AG04450 (cell line): ENCODE measurements at regions of chr7 and their contacts with region 1.

Region 1: DNA sequence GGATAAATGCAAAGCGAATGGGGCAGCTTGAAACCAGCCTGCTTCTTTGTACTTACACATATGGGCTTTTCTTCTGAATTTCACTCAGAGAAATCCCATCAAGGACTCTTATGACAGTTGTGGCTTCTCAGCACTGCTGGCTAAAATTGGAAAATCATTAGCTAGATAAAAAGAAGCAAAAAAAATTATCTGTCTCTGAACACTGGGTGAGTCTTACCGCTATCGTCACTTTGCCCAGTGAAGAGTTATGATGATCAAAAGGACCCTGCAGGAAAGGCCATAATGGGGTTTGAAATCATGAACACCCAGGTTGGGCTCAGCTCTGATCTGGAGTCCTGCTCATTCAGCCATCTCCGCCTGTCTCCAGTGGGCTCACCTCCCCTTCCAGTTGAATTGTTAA is 34.3 kb downstream of the AOAH start:
- DNase-seq: no peak
- H3K4me3 ChIP-seq: no peak overlapping the region
- H3K27ac ChIP-seq: no peak overlapping the region
- H3K27me3 ChIP-seq: no peaks in the 10 kb centered on the region
- CTCF ChIP-seq: no peak

Region 2: GRCh38 chr7:36565792-36566356 is 124.2 kb before region 1 on chr7:
- CTCF ChIA-PET with region 1: interaction called, 10 read pairs
- POLR2A ChIA-PET with region 1: no interaction called
- DNase-seq: no peak
- H3K4me3 ChIP-seq: no peak overlapping the region
- H3K27ac ChIP-seq: no peak overlapping the region
- H3K27me3 ChIP-seq: peaks cover under 1% of the 10 kb centered on the region
- CTCF ChIP-seq: no peak